ENCODE measurements at regions of chr1 and their contacts with region 1.

Region 1: GRCh38 chr1:234599617-234600417 is 10.2 kb downstream of the IRF2BP2 start:
- DNase-seq: peak; percentile 87
- H3K4me3 ChIP-seq: peak overlapping the region; percentile 53 to 60 (median 55)
- H3K27ac ChIP-seq: peak overlapping the region; percentile 88
- H3K4me1 ChIP-seq: peaks cover 42% of the 10 kb centered on the region
- H3K27me3 ChIP-seq: no peaks in the 10 kb centered on the region
- CTCF ChIP-seq: no peak

Region 2: DNA sequence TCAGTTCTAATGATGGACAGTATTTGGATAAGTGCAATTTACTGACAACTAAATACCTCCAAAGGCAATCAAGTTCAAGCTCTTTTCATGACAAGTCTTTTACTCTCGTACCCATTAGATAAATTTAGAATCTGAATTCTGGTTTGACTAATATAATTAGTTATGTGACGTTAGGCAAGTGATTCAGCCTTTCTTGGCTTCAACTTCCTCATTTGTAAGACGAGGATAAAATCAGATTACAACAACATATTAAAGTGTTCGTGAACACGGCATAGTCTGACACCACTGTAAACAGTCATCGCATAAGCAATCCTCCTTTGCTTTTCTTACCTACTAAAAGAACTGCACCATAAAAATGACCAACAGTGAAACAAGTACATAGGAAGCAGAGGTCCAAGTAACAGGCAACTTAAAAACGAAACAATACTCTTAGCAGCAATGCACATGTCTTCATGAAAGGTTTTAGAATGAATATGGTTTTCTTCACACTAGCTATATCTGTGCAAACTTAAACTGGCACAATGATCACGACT is 200.9 kb before region 1 on chr1:
- CTCF ChIA-PET with region 1: no interaction called
- dilution Hi-C with region 1: no loop called
- in situ Hi-C with region 1: no loop called
- intact Hi-C with region 1: loop called (anchors 10 kb)
- DNase-seq: peak; percentile 16
- H3K4me3 ChIP-seq: no peak overlapping the region
- H3K27ac ChIP-seq: no peak overlapping the region
- H3K4me1 ChIP-seq: no peaks in the 10 kb centered on the region
- H3K27me3 ChIP-seq: no peaks in the 10 kb centered on the region
- CTCF ChIP-seq: no peak

Region 3: DNA sequence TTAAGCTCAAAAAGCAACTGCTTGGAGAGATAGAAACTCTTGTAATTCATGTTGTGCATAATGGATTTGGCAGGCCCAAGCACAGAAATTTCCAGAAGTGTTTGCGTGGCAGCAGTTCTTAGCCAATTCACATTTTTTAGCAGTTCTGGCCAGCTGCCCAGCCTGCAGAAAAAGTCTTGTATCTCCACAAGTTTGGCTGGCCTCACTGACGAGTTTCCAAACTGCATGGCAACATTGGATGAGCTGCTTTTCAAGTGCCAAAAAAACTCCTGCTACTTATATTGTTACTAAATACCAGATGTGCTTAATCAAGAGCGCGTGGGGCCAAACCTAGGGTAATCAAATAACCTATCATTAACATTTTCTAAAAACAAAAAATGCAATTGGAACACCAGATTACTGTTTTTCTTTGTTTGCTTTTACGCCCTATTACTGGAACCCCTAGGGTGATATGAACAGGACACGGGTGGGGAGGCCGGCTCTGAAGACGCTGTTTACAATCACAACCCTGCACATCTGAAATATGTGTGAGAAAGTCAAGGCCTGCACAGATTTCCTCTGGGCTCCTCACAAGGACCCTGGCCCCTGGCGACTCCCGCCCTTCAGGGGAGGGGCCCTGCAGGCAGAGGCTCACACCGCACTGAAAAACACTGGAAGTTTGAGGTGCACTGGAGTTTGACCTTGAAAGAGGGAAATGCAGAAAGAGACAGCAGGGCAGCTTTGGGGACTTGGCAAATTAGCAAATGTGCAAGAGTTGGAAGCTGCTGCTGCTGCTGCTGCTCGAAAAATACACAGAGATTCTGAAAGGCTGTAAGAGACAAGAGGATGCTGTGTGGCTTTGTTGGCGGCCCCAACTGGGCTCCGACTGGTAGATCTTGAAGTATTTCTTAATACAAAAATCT is 65.6 kb before region 1 on chr1:
- CTCF ChIA-PET with region 1: interaction called, 4 read pairs
- dilution Hi-C with region 1: no loop called
- in situ Hi-C with region 1: no loop called
- intact Hi-C with region 1: loop called (anchors 2 kb)
- DNase-seq: peak; percentile 69
- H3K4me3 ChIP-seq: no peak overlapping the region
- H3K27ac ChIP-seq: peak overlapping the region; percentile 98
- H3K4me1 ChIP-seq: peaks cover 70% of the 10 kb centered on the region
- H3K27me3 ChIP-seq: no peaks in the 10 kb centered on the region
- CTCF ChIP-seq: no peak

Region 4: DNA sequence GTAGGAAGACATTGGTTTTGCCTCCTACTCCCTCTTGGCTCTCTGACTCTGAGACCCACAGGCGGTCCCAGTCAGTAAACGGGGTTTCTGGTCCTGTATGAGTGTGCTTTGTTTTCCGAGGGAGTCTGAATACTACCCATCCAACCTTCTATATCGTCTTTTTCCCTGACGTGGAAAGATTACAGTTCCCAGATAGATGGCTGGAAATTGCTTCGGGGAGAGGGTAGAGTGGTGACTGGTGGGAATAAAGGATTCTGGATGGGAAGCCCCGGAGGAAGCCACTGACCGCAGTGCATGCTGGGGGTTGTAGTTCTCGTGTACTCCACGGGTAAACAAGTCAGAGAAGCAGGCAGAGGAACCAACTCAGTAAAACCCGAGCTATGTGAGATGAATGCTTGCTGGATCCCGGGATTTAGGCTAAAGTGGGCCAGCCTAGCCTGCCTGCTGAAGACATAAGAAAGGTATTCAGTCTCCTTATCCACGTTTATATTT is 76.3 kb after region 1 on chr1:
- CTCF ChIA-PET with region 1: no interaction called
- dilution Hi-C with region 1: no loop called
- in situ Hi-C with region 1: no loop called
- intact Hi-C with region 1: no loop called
- DNase-seq: peak; percentile 51
- H3K4me3 ChIP-seq: no peak overlapping the region
- H3K27ac ChIP-seq: no peak overlapping the region
- H3K4me1 ChIP-seq: no peaks in the 10 kb centered on the region
- H3K27me3 ChIP-seq: no peaks in the 10 kb centered on the region
- CTCF ChIP-seq: no peak

Measured in mammary epithelial cell (primary cell).